ENCODE measurements at regions of chr6 and their contacts with region 1.

Region 1: GRCh38 chr6:31114970-31115849 is 610 bp downstream of the PSORS1C1 start:
- DNase-seq: peak; percentile 56 to 76
- H3K4me3 ChIP-seq: peak overlapping the region; percentile 58
- H3K27ac ChIP-seq: peak overlapping the region; percentile 95
- H3K4me1 ChIP-seq: peaks cover 43% of the 10 kb centered on the region
- H3K27me3 ChIP-seq: no peaks in the 10 kb centered on the region
- CTCF ChIP-seq: peak; percentile 55; the same call in 1 of the 2 replicates

Region 2: DNA sequence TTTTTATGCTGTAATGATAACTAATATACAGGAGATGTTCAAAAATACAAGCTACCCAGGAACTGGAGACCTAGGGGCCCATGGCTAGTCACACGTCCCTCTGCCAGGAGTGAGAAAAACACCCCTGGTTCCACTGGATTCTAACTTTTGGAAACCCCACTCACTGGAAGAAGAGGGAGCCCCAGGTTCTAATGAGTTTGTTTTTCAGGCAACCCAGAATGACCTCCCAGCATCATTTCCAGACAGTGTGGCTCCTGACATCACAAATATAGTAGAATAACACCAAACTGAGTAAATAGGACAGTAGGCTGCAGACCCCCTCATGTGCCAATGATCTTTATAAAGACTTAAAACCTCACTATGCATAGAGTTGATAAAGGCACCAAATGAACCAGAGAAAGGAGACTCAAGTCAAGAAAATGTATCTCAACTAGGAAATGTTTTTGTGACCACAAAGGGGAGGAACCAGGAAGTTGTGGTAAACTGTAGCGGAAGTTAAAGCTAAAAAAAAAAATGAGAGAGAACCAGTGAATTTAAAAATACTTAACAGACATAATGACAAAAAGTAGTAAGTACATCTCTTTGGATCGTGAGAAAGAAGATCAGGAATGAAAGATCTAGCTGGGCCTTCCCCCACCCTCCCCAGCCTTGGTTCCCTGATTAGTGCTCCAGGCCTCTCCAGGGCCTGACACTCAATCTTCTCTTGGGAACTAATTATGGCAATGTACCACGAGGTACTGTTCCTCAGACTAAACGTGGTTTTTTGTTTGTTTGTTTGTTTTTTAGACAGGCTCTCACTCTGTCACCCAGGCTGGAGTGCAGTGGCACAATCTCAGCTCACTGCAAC is 606.1 kb before region 1 on chr6:
- CTCF ChIA-PET with region 1: no interaction called
- POLR2A ChIA-PET with region 1: interaction called, 19 read pairs
- intact Hi-C with region 1: no loop called
- DNase-seq: peak in 1 of 2 experiments; percentile 42
- H3K4me3 ChIP-seq: no peak overlapping the region
- H3K27ac ChIP-seq: no peak overlapping the region
- H3K4me1 ChIP-seq: peaks cover 9% of the 10 kb centered on the region; the same call in 1 of the 2 replicates
- H3K27me3 ChIP-seq: no peaks in the 10 kb centered on the region
- CTCF ChIP-seq: no peak

Region 3: GRCh38 chr6:30515932-30516753 is 599.1 kb before region 1 on chr6:
- CTCF ChIA-PET with region 1: no interaction called
- POLR2A ChIA-PET with region 1: interaction called, 10 read pairs
- intact Hi-C with region 1: no loop called
- DNase-seq: peak; percentile 87 to 96
- H3K4me3 ChIP-seq: peak overlapping the region; percentile 58
- H3K27ac ChIP-seq: peak overlapping the region; percentile 96
- H3K4me1 ChIP-seq: peaks cover 15% of the 10 kb centered on the region
- H3K27me3 ChIP-seq: no peaks in the 10 kb centered on the region
- CTCF ChIP-seq: no peak

Region 4: GRCh38 chr6:30960907-30961673 is 154.1 kb before region 1 on chr6:
- CTCF ChIA-PET with region 1: no interaction called
- POLR2A ChIA-PET with region 1: no interaction called
- intact Hi-C with region 1: no loop called
- DNase-seq: peak in 1 of 2 experiments; percentile 53
- H3K4me3 ChIP-seq: no peak overlapping the region
- H3K27ac ChIP-seq: no peak overlapping the region
- H3K4me1 ChIP-seq: peaks cover 21% of the 10 kb centered on the region
- H3K27me3 ChIP-seq: no peaks in the 10 kb centered on the region; the same call in 1 of the 2 replicates
- CTCF ChIP-seq: no peak

Region 5: GRCh38 chr6:31079656-31080261 is 35.5 kb before region 1 on chr6:
- CTCF ChIA-PET with region 1: interaction called, 20 read pairs
- POLR2A ChIA-PET with region 1: no interaction called
- intact Hi-C with region 1: no loop called
- DNase-seq: peak; percentile 46 to 64
- H3K4me3 ChIP-seq: no peak overlapping the region
- H3K27ac ChIP-seq: no peak overlapping the region
- H3K4me1 ChIP-seq: no peaks in the 10 kb centered on the region
- H3K27me3 ChIP-seq: no peaks in the 10 kb centered on the region
- CTCF ChIP-seq: peak; percentile 90

Region 6: DNA sequence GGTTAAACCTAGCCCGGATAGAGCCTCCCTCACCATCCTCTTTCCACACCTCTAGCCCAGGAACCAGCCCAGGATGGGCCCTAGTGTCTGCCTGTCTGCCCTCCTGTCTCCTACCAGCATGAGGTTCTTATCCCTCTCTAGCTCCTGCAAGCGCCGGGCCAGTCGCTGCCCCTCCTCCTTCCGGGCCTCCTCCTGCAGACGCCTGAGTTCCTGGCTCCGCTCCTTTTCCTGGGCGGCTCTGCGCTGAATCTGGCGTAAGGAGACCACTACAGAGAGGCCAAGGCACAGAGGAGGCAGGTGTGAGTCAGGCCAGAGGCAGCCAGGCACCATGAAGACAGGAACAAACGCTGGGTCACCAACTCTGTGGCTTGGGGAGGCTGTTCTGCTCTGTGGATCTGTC is 27.9 kb after region 1 on chr6:
- CTCF ChIA-PET with region 1: interaction called, 11 read pairs
- POLR2A ChIA-PET with region 1: no interaction called
- intact Hi-C with region 1: no loop called
- DNase-seq: no peak
- H3K4me3 ChIP-seq: no peak overlapping the region
- H3K27ac ChIP-seq: no peak overlapping the region
- H3K4me1 ChIP-seq: no peaks in the 10 kb centered on the region
- H3K27me3 ChIP-seq: no peaks in the 10 kb centered on the region
- CTCF ChIP-seq: no peak

Region 7: DNA sequence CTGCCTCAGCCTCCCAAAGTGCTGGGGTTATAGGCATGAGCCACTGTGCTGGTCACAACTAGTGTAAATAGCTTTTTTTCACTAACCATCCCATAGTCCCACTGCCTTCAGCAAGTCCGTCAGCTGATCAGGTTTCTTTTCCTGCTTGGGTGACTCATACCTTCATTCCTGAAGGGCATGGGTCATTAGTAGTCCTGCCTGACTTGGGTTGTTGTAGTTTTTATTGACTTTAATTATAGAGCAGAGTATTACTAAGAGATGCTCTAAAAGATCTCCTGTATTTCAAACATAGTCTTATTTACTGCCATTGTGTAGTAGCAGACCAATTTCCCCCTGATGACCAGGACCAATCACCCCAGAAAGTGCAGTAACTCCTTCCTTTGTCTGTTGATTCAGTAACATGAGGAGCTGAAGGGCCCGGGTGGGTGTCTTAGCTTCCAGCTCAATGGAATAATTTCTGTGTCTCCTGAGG is 130.9 kb after region 1 on chr6:
- CTCF ChIA-PET with region 1: no interaction called
- POLR2A ChIA-PET with region 1: no interaction called
- intact Hi-C with region 1: no loop called
- DNase-seq: peak; percentile 68 to 98
- H3K4me3 ChIP-seq: no peak overlapping the region
- H3K27ac ChIP-seq: peak overlapping the region; percentile 55
- H3K4me1 ChIP-seq: peaks cover 15% of the 10 kb centered on the region
- H3K27me3 ChIP-seq: no peaks in the 10 kb centered on the region
- CTCF ChIP-seq: no peak